Transverse colon (tissue), 4 donors: ENCODE measurements at regions of chr10 and their contacts with region 1.

Region 1: DNA sequence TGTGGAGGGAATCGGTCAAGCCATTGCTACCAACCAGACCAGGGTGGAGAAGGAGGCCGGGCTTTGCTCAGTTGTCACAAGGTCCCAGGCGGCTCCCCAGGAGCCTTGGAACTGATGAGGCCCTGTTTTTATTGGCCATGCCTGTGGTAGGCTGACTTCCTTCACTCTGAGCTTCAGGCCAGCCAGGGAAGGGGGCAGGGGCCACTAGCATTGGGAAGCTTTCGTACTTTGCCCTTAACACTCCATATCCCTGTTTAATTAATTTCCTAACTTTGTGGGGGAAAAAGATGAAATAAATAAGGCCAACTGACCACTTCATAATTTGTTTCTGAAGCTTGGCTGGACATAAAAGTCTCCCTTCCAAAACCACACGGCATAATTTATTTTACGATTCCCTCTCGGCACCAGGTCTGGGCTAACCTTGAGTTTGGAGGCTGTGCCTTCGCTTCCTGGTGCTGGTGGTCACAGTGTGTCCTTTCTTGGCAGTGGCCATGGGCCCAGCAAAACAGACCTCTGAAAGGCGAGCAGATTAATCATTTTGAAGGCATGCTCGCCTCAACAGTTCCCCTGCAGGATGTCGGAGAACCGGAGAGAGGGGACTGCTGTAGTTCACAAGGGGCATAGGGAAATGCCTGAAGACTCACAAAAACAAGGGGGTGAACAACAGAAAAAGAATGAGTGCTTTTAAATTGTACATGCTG is 965.9 kb downstream of the LRMDA start:
- DNase-seq: no peak
- H3K4me3 ChIP-seq: no peak overlapping the region
- H3K27ac ChIP-seq: peak overlapping the region; percentile 34 to 78 (median 62)
- H3K4me1 ChIP-seq: peaks cover 0 to 9% (median 3%) of the 10 kb centered on the region in 4 donors
- H3K27me3 ChIP-seq: no peaks in the 10 kb centered on the region
- CTCF ChIP-seq: no peak
- EP300 ChIP-seq: no peak
- POLR2A ChIP-seq: no peak

Region 2: DNA sequence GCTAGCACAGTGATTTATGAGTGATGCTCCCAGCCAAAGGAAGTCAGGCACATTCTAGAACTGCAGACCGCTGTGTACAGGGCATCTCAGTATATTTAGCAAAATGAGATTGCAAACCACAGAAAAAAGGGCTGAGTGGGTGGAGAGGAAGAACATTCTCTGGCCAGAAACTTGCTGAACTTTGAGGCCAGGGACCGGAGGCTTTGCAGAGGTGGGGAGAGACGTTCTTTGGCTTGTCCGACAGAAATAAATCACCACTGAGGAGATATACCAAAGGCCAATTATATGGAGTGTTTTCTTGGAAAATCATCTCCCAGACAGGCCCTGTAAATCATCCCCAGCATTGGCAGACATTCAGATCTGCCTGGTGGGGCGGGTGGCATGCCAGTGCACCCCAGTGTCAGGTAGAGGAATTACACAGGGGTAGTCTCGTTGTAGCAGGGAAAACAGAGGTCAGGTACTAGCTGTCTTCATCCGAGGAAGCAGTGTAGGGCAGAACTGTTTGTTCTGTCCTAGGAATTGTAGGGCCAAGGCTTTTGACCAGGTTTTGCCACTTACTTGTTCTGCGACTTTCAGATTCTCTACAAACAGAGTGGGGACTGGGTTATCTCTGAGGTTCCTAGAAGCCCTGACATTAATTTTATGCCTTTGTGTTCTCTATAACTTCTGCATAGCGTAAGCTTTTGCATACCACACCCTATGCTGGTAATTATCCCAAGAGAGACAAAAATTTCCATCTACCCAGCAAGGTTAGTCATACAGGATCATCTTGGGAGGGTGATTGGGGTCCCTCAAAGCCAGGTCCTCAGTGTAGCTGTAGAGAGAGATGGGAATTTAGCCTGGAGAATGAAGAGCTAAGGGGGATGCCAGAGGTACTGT is 310.3 kb before region 1 on chr10:
- in situ Hi-C with region 1: no loop called
- intact Hi-C with region 1: loop called (anchors 5 kb)
- DNase-seq: peak; percentile 76
- H3K4me3 ChIP-seq: no peak overlapping the region
- H3K27ac ChIP-seq: peak overlapping the region; percentile 22 to 76 (median 54)
- H3K4me1 ChIP-seq: peaks cover 0 to 37% (median 7%) of the 10 kb centered on the region in 4 donors
- H3K27me3 ChIP-seq: no peaks in the 10 kb centered on the region
- CTCF ChIP-seq: peak; percentile 74 to 94 (median 79)
- EP300 ChIP-seq: peak; percentile 4
- POLR2A ChIP-seq: no peak

Region 3: DNA sequence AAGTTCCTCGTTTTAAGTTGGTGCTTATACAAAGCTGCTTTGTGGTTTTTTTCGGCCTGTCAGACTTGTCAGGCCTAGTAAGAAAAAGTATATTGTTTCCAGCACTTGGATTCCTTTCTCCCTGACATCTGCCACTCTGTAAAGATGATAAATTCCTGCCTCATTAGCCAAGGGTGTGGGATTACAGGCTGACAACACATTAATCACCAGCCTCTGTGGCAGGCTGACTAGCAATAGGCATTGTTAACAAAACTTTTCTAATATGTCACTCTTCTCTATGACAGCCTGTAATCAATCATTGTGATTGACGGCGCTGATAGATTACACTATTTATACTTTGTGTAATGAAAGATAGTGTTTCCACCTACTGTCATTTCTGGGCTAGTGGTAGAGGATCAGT is 283.4 kb before region 1 on chr10:
- in situ Hi-C with region 1: no loop called
- intact Hi-C with region 1: no loop called
- DNase-seq: no peak
- H3K4me3 ChIP-seq: no peak overlapping the region
- H3K27ac ChIP-seq: no peak overlapping the region
- H3K4me1 ChIP-seq: peaks cover 0 to 4% (median 0%) of the 10 kb centered on the region in 4 donors
- H3K27me3 ChIP-seq: no peaks in the 10 kb centered on the region
- CTCF ChIP-seq: no peak
- EP300 ChIP-seq: no peak
- POLR2A ChIP-seq: no peak

Region 4: DNA sequence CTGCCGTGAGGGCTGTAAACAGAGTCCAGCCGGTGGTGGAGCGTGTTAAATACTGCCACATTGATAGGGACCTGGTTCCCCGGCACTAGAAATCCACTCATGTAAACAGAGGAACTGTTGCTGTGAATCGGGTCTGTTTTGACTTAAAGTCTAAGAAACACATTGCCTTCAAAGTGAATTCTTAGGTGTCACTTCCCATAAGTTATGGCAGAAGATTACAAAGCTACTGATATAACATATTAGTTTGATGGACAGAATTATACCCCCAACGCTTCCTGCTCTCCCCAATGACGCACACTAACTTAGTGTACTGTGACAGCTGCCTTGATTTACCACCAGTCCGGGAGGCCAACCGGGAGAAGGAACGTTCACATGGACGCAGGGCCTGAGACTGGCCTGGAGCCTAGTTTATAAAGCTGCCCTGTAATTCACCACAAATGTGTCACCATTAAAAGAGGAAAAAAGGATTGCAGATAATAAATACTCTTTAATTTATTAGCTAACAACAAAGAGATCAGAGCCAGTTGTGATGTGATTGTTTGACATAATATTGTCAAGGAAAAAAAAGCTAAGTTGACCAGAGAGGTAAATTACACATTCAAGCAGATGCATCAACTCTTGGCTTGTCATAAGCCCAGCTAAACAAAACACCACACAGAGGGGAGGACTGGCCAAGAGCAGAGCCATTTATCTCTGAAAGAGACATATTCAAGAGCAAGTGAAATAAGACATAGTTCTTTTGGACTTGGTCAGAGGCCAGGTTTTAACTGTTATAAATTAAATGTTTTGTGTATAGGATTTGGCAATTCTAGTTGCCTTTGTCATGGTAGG is 145.3 kb before region 1 on chr10:
- in situ Hi-C with region 1: no loop called
- intact Hi-C with region 1: loop called (anchors 1 kb)
- DNase-seq: peak; percentile 71
- H3K4me3 ChIP-seq: no peak overlapping the region
- H3K27ac ChIP-seq: peak overlapping the region; percentile 52 to 87 (median 65)
- H3K4me1 ChIP-seq: peaks cover 0 to 8% (median 0%) of the 10 kb centered on the region in 4 donors
- H3K27me3 ChIP-seq: no peaks in the 10 kb centered on the region
- CTCF ChIP-seq: no peak
- EP300 ChIP-seq: peak; percentile 91
- POLR2A ChIP-seq: no peak

Region 5: GRCh38 chr10:76523246-76523645 is 125.9 kb after region 1 on chr10:
- in situ Hi-C with region 1: no loop called
- intact Hi-C with region 1: loop called (anchors 1 kb)
- DNase-seq: no peak
- H3K4me3 ChIP-seq: no peak overlapping the region
- H3K27ac ChIP-seq: peak overlapping the region; percentile 21 to 82 (median 60)
- H3K4me1 ChIP-seq: peaks cover 0 to 12% (median 0%) of the 10 kb centered on the region in 4 donors
- H3K27me3 ChIP-seq: no peaks in the 10 kb centered on the region
- CTCF ChIP-seq: no peak
- EP300 ChIP-seq: no peak
- POLR2A ChIP-seq: no peak

Region 6: GRCh38 chr10:77049896-77050295 is 652.6 kb after region 1 on chr10:
- in situ Hi-C with region 1: no loop called
- intact Hi-C with region 1: no loop called
- DNase-seq: no peak
- H3K4me3 ChIP-seq: no peak overlapping the region
- H3K27ac ChIP-seq: no peak overlapping the region
- H3K4me1 ChIP-seq: no peaks in the 10 kb centered on the region
- H3K27me3 ChIP-seq: peaks cover 2% of the 10 kb centered on the region
- CTCF ChIP-seq: no peak
- EP300 ChIP-seq: no peak
- POLR2A ChIP-seq: no peak